Activated naive CD4-positive, alpha-beta T cell treated with anti-CD3 and anti-CD28 coated beads for 36 hours (primary cell): ENCODE measurements at regions of chr12 and their contacts with region 1.

Region 1: DNA sequence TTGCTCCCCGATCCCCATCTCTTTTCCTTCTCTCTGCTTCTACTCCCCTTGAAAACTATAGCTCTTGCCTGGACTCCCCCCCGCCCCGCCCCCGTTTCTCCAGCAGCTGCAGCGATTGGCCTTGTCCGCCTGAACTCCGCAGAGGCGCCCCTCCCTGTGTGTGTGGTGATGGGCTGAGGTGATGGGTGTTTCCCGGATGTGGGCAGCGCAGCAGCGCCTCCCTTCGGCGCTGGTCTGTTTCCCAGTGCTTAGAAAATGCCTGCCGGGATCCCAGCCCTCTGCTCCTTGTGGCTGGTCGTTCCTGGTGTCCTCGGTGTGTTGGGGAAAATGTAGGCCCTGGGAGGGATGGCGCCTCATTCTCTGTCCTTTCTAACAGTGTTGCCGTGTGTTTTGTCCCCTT is 43.3 kb downstream of the GALNT8 start:
- DNase-seq: peak; percentile 7
- H3K4me3 Mint-ChIP-seq: no peak overlapping the region
- H3K27ac Mint-ChIP-seq: no peak overlapping the region
- H3K4me1 Mint-ChIP-seq: no peaks in the 10 kb centered on the region
- H3K27me3 Mint-ChIP-seq: no peaks in the 10 kb centered on the region

Region 2: DNA sequence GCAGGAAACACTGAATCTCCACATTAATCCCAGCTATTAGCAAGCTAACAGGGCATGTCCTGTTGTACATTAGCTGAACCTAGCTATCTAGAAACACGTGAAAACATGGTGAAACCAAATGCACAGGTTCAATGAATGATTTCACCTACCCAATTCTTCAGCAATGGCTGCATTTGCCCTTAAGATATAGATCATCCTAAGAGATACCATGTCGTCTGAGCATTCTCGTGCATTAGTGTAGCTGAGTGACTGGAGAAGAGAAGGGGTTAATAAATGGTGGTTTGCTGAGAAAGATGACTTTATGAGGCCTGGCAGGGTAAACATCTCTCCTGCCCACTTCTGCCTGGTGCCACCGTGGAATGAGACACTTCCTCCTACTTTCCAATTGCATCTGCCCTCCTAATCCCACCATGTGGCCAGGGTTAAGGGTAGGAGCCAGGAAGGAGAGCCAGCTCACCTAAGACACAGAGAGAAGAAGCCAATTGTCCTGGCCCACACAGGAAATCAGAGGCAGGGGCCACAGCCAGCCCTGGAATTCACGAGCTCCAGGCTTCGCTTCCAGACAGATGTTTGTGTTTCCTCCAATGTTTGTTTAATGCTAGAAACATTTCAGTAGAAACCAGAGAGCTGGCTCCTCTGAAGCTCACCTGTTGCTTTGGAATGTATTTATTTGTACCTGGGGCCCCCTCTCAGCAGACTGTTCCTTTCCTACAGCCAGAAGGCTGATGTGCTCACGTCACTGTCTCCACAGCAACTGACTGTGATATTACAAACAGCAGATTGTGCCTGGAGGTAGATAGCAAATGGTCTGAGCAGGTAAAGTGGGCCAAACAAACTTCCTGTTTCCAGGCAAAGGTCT is 764.4 kb before region 1 on chr12:
- CTCF ChIA-PET with region 1: interaction called, 3 read pairs
- intact Hi-C with region 1: loop called (anchors 10 kb)
- DNase-seq: no peak
- H3K4me3 Mint-ChIP-seq: no peak overlapping the region
- H3K27ac Mint-ChIP-seq: no peak overlapping the region
- H3K4me1 Mint-ChIP-seq: peaks cover 5% of the 10 kb centered on the region
- H3K27me3 Mint-ChIP-seq: no peaks in the 10 kb centered on the region

Region 3: DNA sequence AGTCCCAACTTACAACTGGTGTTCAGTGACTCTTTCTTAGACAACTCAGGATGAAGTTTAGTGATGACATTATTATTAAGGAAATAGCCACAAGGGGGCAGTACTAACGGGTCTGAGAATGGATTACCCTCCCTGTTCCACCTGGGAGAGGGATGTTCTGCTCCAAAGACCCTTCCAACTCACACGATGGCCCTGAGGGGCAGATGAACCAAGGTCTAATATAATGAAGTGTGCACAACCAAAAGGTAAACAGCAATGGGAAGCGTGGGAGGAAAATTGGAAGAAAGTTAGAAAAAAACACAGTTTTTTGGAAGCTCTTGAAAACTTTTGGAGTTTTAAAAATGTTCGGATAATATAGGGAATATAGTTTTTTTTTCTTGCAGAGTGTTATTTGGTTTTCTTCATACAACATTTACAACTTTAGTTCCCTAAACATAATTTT is 341.9 kb before region 1 on chr12:
- CTCF ChIA-PET with region 1: interaction called, 3 read pairs
- intact Hi-C with region 1: loop called (anchors 1 kb)
- DNase-seq: peak; percentile 31
- H3K4me3 Mint-ChIP-seq: no peak overlapping the region
- H3K27ac Mint-ChIP-seq: no peak overlapping the region
- H3K4me1 Mint-ChIP-seq: no peaks in the 10 kb centered on the region
- H3K27me3 Mint-ChIP-seq: peaks cover 4% of the 10 kb centered on the region

Region 4: GRCh38 chr12:4579305-4580102 is 184.0 kb before region 1 on chr12:
- CTCF ChIA-PET with region 1: interaction called, 6 read pairs
- intact Hi-C with region 1: loop called (anchors 1 kb)
- DNase-seq: peak; percentile 30
- H3K4me3 Mint-ChIP-seq: no peak overlapping the region
- H3K27ac Mint-ChIP-seq: no peak overlapping the region
- H3K4me1 Mint-ChIP-seq: no peaks in the 10 kb centered on the region
- H3K27me3 Mint-ChIP-seq: peaks cover 1% of the 10 kb centered on the region